Activated CD4-positive, alpha-beta memory T cell treated with anti-CD3 and anti-CD28 coated beads for 36 hours (primary cell): ENCODE measurements at regions of chr20 and their contacts with region 1.

Region 1: DNA sequence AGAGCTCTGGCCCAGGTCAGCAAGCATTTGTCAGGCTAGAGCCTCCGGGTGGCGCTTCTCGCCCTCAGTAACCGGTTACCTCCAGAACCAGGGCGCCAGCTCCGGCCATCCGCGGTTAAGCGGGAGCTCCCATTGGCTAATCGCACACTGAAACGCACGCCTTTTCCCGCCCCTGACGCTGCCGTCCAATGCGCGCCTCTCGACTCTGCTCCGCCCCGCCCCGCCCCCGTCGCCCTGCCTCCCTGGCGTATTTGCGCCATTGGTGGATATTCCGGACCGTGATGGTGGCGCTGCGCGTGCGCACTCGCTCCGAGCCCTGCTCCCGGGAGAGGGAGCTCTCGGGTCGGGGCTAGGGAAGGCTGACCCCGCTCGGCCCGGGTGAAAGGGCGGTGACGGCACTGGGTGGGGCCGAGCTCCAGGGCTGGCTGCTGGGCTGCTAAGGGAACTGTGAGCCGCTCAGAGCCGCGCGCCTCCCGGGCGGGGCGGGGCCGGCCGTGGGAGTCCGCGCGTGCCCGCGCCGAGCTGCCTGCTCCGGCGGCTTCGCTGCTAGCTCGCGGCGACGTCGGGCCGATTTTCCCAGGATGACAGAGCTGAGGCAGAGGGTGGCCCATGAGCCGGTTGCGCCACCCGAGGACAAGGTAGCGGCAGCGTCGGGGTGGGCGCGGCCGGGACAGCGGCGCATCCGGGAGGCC is at the start of gene CDS2:
- DNase-seq: peak; percentile 100
- H3K4me3 Mint-ChIP-seq: peak within 1 kb of the TSS; percentile 86
- H3K27ac Mint-ChIP-seq: peak within 1 kb of the TSS; percentile 90
- H3K4me1 Mint-ChIP-seq: peaks cover 32% of the 10 kb centered on the region
- H3K27me3 Mint-ChIP-seq: no peaks in the 10 kb centered on the region
- total RNA-seq, gene CDS2: 46.5 to 47.4 TPM

Region 2: GRCh38 chr20:5078399-5078958 is 48.2 kb before region 1 on chr20:
- CTCF ChIA-PET with region 1: no interaction called
- POLR2A ChIA-PET with region 1: no interaction called
- intact Hi-C with region 1: loop called (anchors 1 kb)
- DNase-seq: peak; percentile 92
- H3K4me3 Mint-ChIP-seq: peak overlapping the region; percentile 60
- H3K27ac Mint-ChIP-seq: peak overlapping the region; percentile 90
- H3K4me1 Mint-ChIP-seq: peaks cover 37% of the 10 kb centered on the region
- H3K27me3 Mint-ChIP-seq: no peaks in the 10 kb centered on the region

Region 3: GRCh38 chr20:5156675-5157448 is 30.2 kb after region 1 on chr20:
- CTCF ChIA-PET with region 1: interaction called, 46 read pairs
- POLR2A ChIA-PET with region 1: interaction called, 5 read pairs
- intact Hi-C with region 1: no loop called
- DNase-seq: no peak
- H3K4me3 Mint-ChIP-seq: no peak overlapping the region
- H3K27ac Mint-ChIP-seq: no peak overlapping the region
- H3K4me1 Mint-ChIP-seq: peaks cover 65% of the 10 kb centered on the region
- H3K27me3 Mint-ChIP-seq: no peaks in the 10 kb centered on the region

Region 4: GRCh38 chr20:5191829-5192569 is 65.3 kb after region 1 on chr20:
- CTCF ChIA-PET with region 1: interaction called, 208 read pairs
- POLR2A ChIA-PET with region 1: interaction called, 17 read pairs
- intact Hi-C with region 1: loop called (anchors 1 kb)
- DNase-seq: peak; percentile 49
- H3K4me3 Mint-ChIP-seq: no peak overlapping the region
- H3K27ac Mint-ChIP-seq: peak overlapping the region; percentile 73
- H3K4me1 Mint-ChIP-seq: peaks cover 24% of the 10 kb centered on the region
- H3K27me3 Mint-ChIP-seq: no peaks in the 10 kb centered on the region

Region 5: DNA sequence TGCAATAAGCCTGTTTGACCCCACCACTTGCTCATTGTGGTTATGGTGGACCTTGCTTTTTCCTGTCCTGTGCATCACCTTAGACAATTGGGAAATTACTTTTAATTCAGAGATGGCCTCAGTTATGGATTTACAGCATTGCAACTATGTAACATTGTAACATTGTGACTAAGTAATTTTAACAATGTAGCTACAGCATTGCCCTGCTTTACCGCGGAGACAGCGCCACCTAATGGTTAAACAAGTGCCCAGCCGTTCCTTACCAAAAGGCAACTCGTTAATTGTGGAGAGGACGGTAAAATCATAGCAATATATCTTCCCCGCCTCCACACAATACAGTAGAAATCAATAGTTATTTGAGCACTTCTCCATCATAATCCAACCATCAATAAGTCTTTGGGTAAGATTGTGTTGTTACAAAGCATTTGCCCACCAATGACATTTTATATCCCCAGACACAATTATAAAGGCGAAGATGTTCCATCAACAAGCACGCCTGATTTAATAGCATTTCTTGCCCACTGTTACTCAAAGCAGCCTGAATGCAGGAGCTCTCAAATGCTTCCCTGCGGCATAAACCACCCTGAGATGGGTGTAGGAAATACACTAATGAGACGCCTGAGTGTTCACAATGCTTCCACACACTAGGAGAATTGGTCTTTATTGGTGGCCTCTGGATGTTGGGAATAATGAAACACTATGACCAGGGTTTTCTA is 96.4 kb after region 1 on chr20:
- CTCF ChIA-PET with region 1: interaction called, 38 read pairs
- POLR2A ChIA-PET with region 1: interaction called, 3 read pairs
- intact Hi-C with region 1: loop called (anchors 1 kb)
- DNase-seq: peak; percentile 76
- H3K4me3 Mint-ChIP-seq: no peak overlapping the region
- H3K27ac Mint-ChIP-seq: no peak overlapping the region
- H3K4me1 Mint-ChIP-seq: no peaks in the 10 kb centered on the region
- H3K27me3 Mint-ChIP-seq: no peaks in the 10 kb centered on the region

Region 6: DNA sequence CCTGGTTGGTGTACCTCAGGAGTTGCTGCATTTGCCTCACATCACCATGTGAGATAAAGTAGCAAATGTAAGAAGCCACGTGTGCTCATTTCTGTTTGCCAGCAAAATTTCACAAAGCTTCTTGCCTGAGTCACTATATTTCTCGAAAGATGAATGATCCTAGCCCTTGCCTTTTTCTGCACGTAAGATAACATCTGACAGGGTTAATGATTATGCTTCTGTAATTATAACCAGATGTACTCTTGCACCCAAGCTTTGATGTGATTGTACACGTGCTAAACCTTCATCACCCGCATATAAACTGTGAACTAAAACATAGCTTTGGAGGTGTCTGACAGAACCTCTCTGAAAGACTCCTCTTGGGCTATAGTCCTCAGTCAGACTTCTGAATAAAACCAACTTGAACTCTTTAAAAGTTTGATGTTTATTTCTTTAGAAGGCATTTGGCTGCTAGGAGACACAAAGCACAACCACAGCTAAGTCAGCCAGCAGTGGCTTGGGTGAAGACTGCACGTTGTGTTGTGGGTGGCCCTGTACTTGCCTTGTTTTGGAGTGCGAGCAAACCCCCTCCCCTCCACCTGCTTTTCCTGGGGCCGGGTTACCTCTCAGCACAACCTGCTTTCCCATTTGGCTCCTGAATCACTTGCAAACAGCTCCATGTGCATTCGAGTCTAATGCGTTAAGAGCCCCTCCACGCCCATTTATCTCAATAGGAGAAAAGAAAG is 170.8 kb after region 1 on chr20:
- CTCF ChIA-PET with region 1: no interaction called
- POLR2A ChIA-PET with region 1: no interaction called
- intact Hi-C with region 1: no loop called
- DNase-seq: no peak
- H3K4me3 Mint-ChIP-seq: no peak overlapping the region
- H3K27ac Mint-ChIP-seq: no peak overlapping the region
- H3K4me1 Mint-ChIP-seq: no peaks in the 10 kb centered on the region
- H3K27me3 Mint-ChIP-seq: peaks cover 14% of the 10 kb centered on the region

Region 7: GRCh38 chr20:5596401-5597193 is 469.9 kb after region 1 on chr20:
- CTCF ChIA-PET with region 1: no interaction called
- POLR2A ChIA-PET with region 1: no interaction called
- intact Hi-C with region 1: loop called (anchors 10 kb)
- DNase-seq: no peak
- H3K4me3 Mint-ChIP-seq: no peak overlapping the region
- H3K27ac Mint-ChIP-seq: peak overlapping the region; percentile 66
- H3K4me1 Mint-ChIP-seq: peaks cover 66% of the 10 kb centered on the region
- H3K27me3 Mint-ChIP-seq: no peaks in the 10 kb centered on the region

Region 8: GRCh38 chr20:5950271-5951031 is 823.8 kb after region 1 on chr20 and contains the starts of genes MCM8 and TRMT6:
- CTCF ChIA-PET with region 1: no interaction called
- POLR2A ChIA-PET with region 1: no interaction called
- intact Hi-C with region 1: loop called (anchors 1 kb)
- DNase-seq: peak; percentile 98
- H3K4me3 Mint-ChIP-seq: peak within 1 kb of the TSS; percentile 88
- H3K27ac Mint-ChIP-seq: peak within 1 kb of the TSS; percentile 95
- H3K4me1 Mint-ChIP-seq: peaks cover 58% of the 10 kb centered on the region
- H3K27me3 Mint-ChIP-seq: peaks cover 1% of the 10 kb centered on the region
- total RNA-seq, gene MCM8: 46.8 to 50.7 TPM
- total RNA-seq, gene TRMT6: 24.9 to 27.1 TPM